ENCODE measurements at regions of chr17 and their contacts with region 1.

Region 1: DNA sequence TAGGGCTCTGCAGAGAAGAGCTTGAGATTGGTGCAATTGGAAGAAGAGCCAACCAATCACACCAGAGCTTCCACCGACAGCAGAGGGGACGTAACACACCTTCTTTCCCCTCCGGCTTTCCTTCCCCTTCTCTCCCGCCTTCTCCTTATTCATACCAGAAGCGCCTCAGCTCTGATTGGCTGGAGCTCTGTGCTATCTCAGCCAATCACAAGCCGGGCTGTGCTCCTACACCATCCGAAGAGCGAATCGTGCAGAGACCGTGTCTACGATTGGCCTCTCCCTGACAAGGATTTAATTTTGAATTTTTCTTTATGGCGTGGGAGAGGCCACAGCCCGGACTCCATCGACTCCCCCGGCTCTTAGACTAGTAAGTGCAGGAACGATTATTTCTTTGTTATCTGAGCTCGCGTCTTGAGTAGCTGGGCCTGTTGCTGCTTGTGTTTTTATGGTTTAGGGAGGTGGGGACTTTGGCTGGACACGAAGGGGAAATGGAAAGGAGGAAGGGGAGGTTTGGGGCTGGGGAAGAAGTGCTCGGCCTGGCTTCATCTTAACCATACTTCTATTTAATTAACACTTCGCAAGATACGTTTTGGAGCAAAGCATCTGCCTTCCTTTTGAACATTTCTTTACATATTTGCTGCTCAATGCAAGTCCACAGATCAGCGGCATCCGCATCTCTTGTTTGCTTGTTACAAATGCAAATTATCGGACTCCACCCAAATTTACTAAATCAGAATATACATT is at the start of gene PRR11:
- DNase-seq: peak; percentile 97
- H3K4me3 Mint-ChIP-seq: no peak within 1 kb of the TSS
- H3K27ac Mint-ChIP-seq: no peak within 1 kb of the TSS
- H3K4me1 Mint-ChIP-seq: peaks cover 25% of the 10 kb centered on the region
- H3K27me3 Mint-ChIP-seq: no peaks in the 10 kb centered on the region
- total RNA-seq, gene PRR11: 77.4 to 82.1 TPM

Region 2: GRCh38 chr17:58658804-58659713 is 496.6 kb before region 1 on chr17:
- CTCF ChIA-PET with region 1: no interaction called
- intact Hi-C with region 1: loop called (anchors 2 kb)
- DNase-seq: peak; percentile 88
- H3K4me3 Mint-ChIP-seq: peak overlapping the region; percentile 69
- H3K27ac Mint-ChIP-seq: peak overlapping the region; percentile 98
- H3K4me1 Mint-ChIP-seq: peaks cover 16% of the 10 kb centered on the region
- H3K27me3 Mint-ChIP-seq: peaks cover 8% of the 10 kb centered on the region

Region 3: GRCh38 chr17:59106463-59107305 is 48.9 kb before region 1 on chr17 and contains the start of gene TRIM37:
- CTCF ChIA-PET with region 1: interaction called, 3 read pairs
- intact Hi-C with region 1: loop called (anchors 1 kb)
- DNase-seq: peak; percentile 99
- H3K4me3 Mint-ChIP-seq: peak within 1 kb of the TSS; percentile 96
- H3K27ac Mint-ChIP-seq: peak within 1 kb of the TSS; percentile 89
- H3K4me1 Mint-ChIP-seq: peaks cover 54% of the 10 kb centered on the region
- H3K27me3 Mint-ChIP-seq: no peaks in the 10 kb centered on the region
- total RNA-seq, gene TRIM37: 19.9 to 24.1 TPM

Region 4: GRCh38 chr17:59619293-59620063 is 463.9 kb after region 1 on chr17 and contains the start of gene CLTC:
- CTCF ChIA-PET with region 1: no interaction called
- intact Hi-C with region 1: loop called (anchors 2 kb)
- DNase-seq: peak; percentile 94
- H3K4me3 Mint-ChIP-seq: peak within 1 kb of the TSS; percentile 93
- H3K27ac Mint-ChIP-seq: peak within 1 kb of the TSS; percentile 96
- H3K4me1 Mint-ChIP-seq: peaks cover 49% of the 10 kb centered on the region
- H3K27me3 Mint-ChIP-seq: no peaks in the 10 kb centered on the region
- total RNA-seq, gene CLTC: 127 to 134 TPM

Region 5: DNA sequence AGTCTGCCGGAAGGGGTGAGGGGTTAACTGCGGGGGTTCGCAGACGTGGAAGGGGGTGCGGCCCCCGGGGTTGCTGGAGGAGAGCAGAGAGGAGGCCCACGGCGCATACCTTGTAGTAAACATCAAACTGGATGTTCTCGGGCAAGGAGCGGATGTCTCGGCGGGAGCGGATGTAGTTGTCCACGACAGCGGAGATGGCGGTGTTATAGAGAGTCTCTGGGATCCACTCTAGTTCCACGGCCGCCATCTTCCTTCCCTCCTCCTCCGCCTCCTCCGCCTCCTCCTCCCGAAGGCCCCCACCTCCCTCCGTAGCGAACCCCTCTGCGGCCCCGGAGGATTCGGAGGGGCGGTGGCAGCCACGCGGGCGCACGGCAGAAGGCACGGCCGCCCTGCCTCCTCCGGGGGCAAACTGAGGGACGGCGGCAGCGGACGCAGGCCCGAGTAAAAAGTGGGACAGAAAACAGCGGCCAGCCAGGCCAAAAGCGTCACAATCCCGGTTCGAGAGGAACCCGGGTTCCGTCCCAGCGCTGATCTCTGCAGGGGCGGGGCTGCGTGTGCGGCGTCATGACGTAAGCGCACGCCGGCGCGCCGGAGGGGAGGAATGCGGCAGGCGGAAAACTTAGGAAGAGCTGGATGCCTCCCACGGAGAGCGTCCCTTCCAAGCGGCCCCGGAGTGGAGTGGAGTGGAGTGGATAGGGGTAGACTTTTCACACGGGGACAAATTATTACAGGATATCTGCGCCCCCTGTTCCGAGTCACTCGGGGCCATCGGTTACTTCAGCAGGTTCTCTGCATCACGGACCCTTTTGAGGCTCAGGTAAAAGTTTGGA is 1370.3 kb after region 1 on chr17 and contains the start of gene APPBP2:
- CTCF ChIA-PET with region 1: no interaction called
- intact Hi-C with region 1: loop called (anchors 2 kb)
- DNase-seq: peak; percentile 81
- H3K4me3 Mint-ChIP-seq: peak within 1 kb of the TSS; percentile 96
- H3K27ac Mint-ChIP-seq: peak within 1 kb of the TSS; percentile 93
- H3K4me1 Mint-ChIP-seq: peaks cover 27% of the 10 kb centered on the region
- H3K27me3 Mint-ChIP-seq: no peaks in the 10 kb centered on the region
- total RNA-seq, gene APPBP2: 16.5 to 22.3 TPM